A549 (cell line): ENCODE measurements at regions of chr3 and their contacts with region 1.

Region 1: DNA sequence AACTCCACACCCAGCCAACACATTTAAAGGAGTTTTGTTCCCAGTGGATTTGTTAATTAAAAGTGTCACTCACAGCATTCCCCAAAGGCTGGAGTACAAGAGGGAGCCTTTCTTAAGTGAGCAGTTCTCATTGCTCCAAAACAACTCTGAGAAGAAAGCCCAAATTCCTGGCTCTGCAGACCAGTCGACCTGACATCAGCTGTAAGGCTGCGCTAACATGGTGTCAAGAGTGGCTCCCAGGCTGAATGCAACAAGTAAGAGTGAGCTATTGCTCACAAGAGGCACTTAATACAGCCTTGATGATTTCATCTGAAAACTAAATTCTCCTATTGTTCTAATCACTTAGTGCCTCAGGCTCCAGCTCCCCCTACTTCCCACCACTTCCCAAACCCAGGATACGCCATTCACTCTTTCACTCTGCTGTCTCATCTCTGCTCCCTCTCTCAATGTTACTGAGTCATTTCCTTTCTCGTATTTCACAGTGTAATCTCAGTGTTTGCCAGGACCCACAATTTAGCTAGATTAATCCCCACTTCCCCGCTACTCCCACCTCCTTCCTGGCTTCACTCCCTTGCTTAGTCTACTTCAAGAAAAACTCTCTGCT is 81.8 kb downstream of the WWTR1 start:
- DNase-seq: peak; percentile 62 to 89
- ATAC-seq: peak; percentile 87 to 88
- H3K4me3 ChIP-seq: peak overlapping the region; percentile 15; the same call in 2 of the 3 replicates
- H3K27ac ChIP-seq: peak overlapping the region; percentile 94
- H3K4me1 ChIP-seq: peaks cover 98% of the 10 kb centered on the region
- CTCF ChIP-seq: no peak
- EP300 ChIP-seq: peak; percentile 80 to 91; a peak in 3 of 5 replicates
- POLR2A ChIP-seq: no peak
- RAD21 ChIP-seq: peak; percentile 33 to 49

Region 2: DNA sequence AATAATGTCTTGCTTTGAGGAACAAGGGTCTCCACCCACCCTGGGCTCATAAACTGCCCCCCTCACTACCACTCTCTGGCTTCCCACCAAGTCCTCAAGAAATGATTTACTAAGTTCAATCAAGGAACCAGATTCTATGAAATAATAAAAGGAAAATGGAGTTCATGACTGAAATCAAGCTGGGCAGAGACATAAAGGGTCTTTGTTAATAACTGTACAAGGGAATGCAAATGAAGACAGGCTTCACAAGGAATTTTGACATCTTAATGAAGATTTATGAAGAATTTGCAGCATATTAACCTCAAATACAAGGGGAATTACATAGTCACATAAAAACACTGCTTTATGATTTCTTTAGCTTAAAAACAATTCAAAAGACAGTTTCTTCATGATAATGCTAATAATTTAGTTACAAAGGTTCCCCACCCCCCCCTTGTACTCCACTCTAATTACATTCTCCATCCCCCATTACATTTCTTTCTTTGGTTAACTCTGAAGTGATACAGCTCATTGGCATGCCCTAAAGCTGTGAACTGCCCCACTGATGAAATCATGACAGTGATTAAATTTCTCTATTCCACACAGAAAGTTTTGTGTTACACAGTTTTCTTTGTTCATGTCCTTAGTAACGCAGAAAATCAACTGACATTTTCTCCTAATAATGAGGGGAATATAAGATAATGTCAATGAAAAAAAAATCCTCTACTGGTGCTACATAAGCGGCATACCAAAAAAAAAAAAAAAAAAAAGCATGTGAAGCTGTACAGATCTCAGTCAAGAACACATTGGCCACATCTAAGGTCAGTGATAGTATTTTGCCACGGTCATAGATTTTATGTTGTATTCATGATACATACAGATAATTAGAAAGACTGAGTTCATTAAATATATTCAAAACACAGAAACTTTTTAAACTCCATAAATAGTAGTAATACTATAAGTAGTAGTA is 27.3 kb after region 1 on chr3:
- CTCF ChIA-PET with region 1: interaction called, 5 read pairs
- POLR2A ChIA-PET with region 1: interaction called, 15 read pairs
- DNase-seq: peak; percentile 60 to 64
- ATAC-seq: peak in 1 of 2 experiments; percentile 53; a peak in 3 of 6 replicates
- H3K4me3 ChIP-seq: no peak overlapping the region
- H3K27ac ChIP-seq: peak overlapping the region; percentile 84 to 89
- H3K4me1 ChIP-seq: peaks cover 98% of the 10 kb centered on the region
- CTCF ChIP-seq: no peak
- EP300 ChIP-seq: peak; percentile 20 to 26; a peak in 1 of 5 replicates
- POLR2A ChIP-seq: no peak
- RAD21 ChIP-seq: no peak

Region 3: GRCh38 chr3:149638228-149639092 is 62.4 kb after region 1 on chr3:
- CTCF ChIA-PET with region 1: no interaction called
- POLR2A ChIA-PET with region 1: no interaction called
- DNase-seq: no peak
- ATAC-seq: peak; percentile 50 to 56; a peak in 4 of 6 replicates
- H3K4me3 ChIP-seq: no peak overlapping the region; the same call in 2 of the 3 replicates
- H3K27ac ChIP-seq: peak overlapping the region; percentile 13 to 67; a peak in 4 of 6 replicates
- H3K4me1 ChIP-seq: peaks cover 39% of the 10 kb centered on the region
- CTCF ChIP-seq: no peak
- EP300 ChIP-seq: no peak
- POLR2A ChIP-seq: no peak
- RAD21 ChIP-seq: no peak